Activated CD4-positive, alpha-beta memory T cell treated with anti-CD3 and anti-CD28 coated beads for 36 hours (primary cell): ENCODE measurements at regions of chr13 and their contacts with region 1.

Region 1: DNA sequence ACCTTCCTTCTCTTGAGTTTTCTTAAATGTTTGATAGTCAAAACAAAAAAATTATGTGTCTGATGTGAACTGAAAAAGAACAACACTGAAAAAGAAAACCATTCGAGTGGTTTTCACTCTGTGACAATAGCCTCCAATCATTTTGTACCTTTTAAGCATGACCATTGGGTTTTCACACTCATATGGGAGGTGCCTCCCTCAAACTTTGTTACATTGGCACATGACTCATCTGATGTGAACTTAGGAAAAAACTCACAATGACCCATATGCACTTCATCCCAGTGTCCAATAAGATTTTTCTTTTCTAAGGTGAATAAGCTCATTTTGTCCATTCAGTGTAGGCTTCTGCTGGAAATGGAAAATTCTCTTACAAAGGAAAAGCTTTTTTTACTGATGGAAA is 66.6 kb upstream of the XPO4 start:
- DNase-seq: no peak
- H3K4me3 Mint-ChIP-seq: no peak overlapping the region
- H3K27ac Mint-ChIP-seq: peak overlapping the region; percentile 50
- H3K4me1 Mint-ChIP-seq: peaks cover 11% of the 10 kb centered on the region
- H3K27me3 Mint-ChIP-seq: peaks cover 3% of the 10 kb centered on the region

Region 2: GRCh38 chr13:21014502-21015170 is 45.5 kb after region 1 on chr13:
- CTCF ChIA-PET with region 1: no interaction called
- POLR2A ChIA-PET with region 1: no interaction called
- intact Hi-C with region 1: loop called (anchors 1 kb)
- DNase-seq: no peak
- H3K4me3 Mint-ChIP-seq: no peak overlapping the region
- H3K27ac Mint-ChIP-seq: no peak overlapping the region
- H3K4me1 Mint-ChIP-seq: peaks cover 28% of the 10 kb centered on the region
- H3K27me3 Mint-ChIP-seq: no peaks in the 10 kb centered on the region